A673 (cell line): ENCODE measurements at regions of chr2 and their contacts with region 1.

Region 1: GRCh38 chr2:194319222-194319992 is 1337.6 kb upstream of the SLC39A10 start:
- DNase-seq: peak; percentile 1
- H3K4me3 ChIP-seq: no peak overlapping the region
- H3K27ac ChIP-seq: no peak overlapping the region
- H3K4me1 ChIP-seq: no peaks in the 10 kb centered on the region
- H3K27me3 ChIP-seq: no peaks in the 10 kb centered on the region
- CTCF ChIP-seq: 0 out of 2 replicates have a peak, but pooled peaks have one; percentile 21

Region 2: GRCh38 chr2:194182888-194183287 is 136.5 kb before region 1 on chr2:
- CTCF ChIA-PET with region 1: no interaction called
- POLR2A ChIA-PET with region 1: no interaction called
- intact Hi-C with region 1: loop called (anchors 10 kb)
- DNase-seq: no peak
- H3K4me3 ChIP-seq: no peak overlapping the region
- H3K27ac ChIP-seq: no peak overlapping the region
- H3K4me1 ChIP-seq: no peaks in the 10 kb centered on the region
- H3K27me3 ChIP-seq: no peaks in the 10 kb centered on the region
- CTCF ChIP-seq: no peak

Region 3: DNA sequence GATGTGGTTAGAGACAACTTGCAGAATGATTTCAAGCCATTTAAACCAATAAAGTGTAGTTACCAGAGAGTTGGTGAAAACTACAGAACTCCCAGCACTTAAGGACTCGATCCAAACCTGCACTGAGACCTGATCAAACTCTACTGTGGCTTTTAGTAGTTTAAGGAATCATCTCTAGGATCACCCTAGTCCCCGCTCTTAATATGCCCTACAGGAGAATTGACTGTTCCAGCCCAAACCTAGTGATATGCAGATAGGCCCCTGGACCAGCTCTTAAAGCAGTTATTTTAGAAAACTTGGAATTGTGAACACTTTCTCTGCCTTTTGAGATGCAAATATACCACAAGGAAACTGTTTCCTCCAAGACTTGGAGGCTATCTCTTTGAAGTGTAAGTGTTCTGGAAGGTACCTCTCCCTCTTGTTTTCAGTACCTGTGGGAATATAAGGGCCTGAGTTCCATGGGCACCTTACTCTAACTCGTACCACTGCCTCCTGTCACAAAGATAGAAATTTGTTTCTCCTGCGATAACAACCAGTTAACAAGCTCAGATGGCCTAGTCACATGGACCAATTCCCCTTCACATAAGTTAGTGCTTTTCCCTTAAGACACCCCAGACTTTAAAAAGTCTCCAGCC is 29.6 kb before region 1 on chr2:
- CTCF ChIA-PET with region 1: no interaction called
- POLR2A ChIA-PET with region 1: no interaction called
- intact Hi-C with region 1: no loop called
- DNase-seq: no peak
- H3K4me3 ChIP-seq: no peak overlapping the region
- H3K27ac ChIP-seq: no peak overlapping the region
- H3K4me1 ChIP-seq: no peaks in the 10 kb centered on the region
- H3K27me3 ChIP-seq: no peaks in the 10 kb centered on the region
- CTCF ChIP-seq: no peak

Region 4: GRCh38 chr2:194346193-194346592 is 26.8 kb after region 1 on chr2:
- CTCF ChIA-PET with region 1: no interaction called
- POLR2A ChIA-PET with region 1: no interaction called
- intact Hi-C with region 1: no loop called
- DNase-seq: peak; percentile 30
- H3K4me3 ChIP-seq: no peak overlapping the region
- H3K27ac ChIP-seq: no peak overlapping the region
- H3K4me1 ChIP-seq: peaks cover 6% of the 10 kb centered on the region
- H3K27me3 ChIP-seq: no peaks in the 10 kb centered on the region
- CTCF ChIP-seq: no peak

Region 5: GRCh38 chr2:194514281-194514680 is 194.9 kb after region 1 on chr2:
- CTCF ChIA-PET with region 1: no interaction called
- POLR2A ChIA-PET with region 1: no interaction called
- intact Hi-C with region 1: no loop called
- DNase-seq: no peak
- H3K4me3 ChIP-seq: no peak overlapping the region
- H3K27ac ChIP-seq: no peak overlapping the region
- H3K4me1 ChIP-seq: no peaks in the 10 kb centered on the region
- H3K27me3 ChIP-seq: no peaks in the 10 kb centered on the region
- CTCF ChIP-seq: no peak